A673 (cell line): ENCODE measurements at regions of chr15 and their contacts with region 1.

Region 1: GRCh38 chr15:34810455-34811146 is 15.3 kb upstream of the ACTC1 start:
- DNase-seq: no peak
- H3K4me3 ChIP-seq: no peak overlapping the region
- H3K27ac ChIP-seq: no peak overlapping the region
- H3K4me1 ChIP-seq: no peaks in the 10 kb centered on the region
- H3K27me3 ChIP-seq: no peaks in the 10 kb centered on the region
- CTCF ChIP-seq: no peak

Region 2: GRCh38 chr15:34116625-34117024 is 694.0 kb before region 1 on chr15:
- CTCF ChIA-PET with region 1: no interaction called
- POLR2A ChIA-PET with region 1: no interaction called
- intact Hi-C with region 1: no loop called
- DNase-seq: no peak
- H3K4me3 ChIP-seq: no peak overlapping the region
- H3K27ac ChIP-seq: no peak overlapping the region
- H3K4me1 ChIP-seq: no peaks in the 10 kb centered on the region
- H3K27me3 ChIP-seq: no peaks in the 10 kb centered on the region
- CTCF ChIP-seq: no peak

Region 3: GRCh38 chr15:34879107-34879506 is 68.5 kb after region 1 on chr15:
- CTCF ChIA-PET with region 1: no interaction called
- POLR2A ChIA-PET with region 1: no interaction called
- intact Hi-C with region 1: loop called (anchors 10 kb)
- DNase-seq: no peak
- H3K4me3 ChIP-seq: no peak overlapping the region
- H3K27ac ChIP-seq: no peak overlapping the region
- H3K4me1 ChIP-seq: no peaks in the 10 kb centered on the region
- H3K27me3 ChIP-seq: no peaks in the 10 kb centered on the region
- CTCF ChIP-seq: no peak